ENCODE measurements at regions of chr4 and their contacts with region 1.

Region 1: GRCh38 chr4:15457406-15458201 is 12.1 kb upstream of the CC2D2A start:
- DNase-seq: no peak
- H3K4me3 ChIP-seq: no peak overlapping the region
- H3K27ac ChIP-seq: no peak overlapping the region
- H3K4me1 ChIP-seq: no peaks in the 10 kb centered on the region
- H3K27me3 ChIP-seq: no peaks in the 10 kb centered on the region
- CTCF ChIP-seq: peak in 2 of 3 experiments; percentile 34 to 54; a peak in 2 of 4 replicates
- EP300 ChIP-seq: no peak
- POLR2A ChIP-seq: no peak
- RAD21 ChIP-seq: peak; percentile 77

Region 2: DNA sequence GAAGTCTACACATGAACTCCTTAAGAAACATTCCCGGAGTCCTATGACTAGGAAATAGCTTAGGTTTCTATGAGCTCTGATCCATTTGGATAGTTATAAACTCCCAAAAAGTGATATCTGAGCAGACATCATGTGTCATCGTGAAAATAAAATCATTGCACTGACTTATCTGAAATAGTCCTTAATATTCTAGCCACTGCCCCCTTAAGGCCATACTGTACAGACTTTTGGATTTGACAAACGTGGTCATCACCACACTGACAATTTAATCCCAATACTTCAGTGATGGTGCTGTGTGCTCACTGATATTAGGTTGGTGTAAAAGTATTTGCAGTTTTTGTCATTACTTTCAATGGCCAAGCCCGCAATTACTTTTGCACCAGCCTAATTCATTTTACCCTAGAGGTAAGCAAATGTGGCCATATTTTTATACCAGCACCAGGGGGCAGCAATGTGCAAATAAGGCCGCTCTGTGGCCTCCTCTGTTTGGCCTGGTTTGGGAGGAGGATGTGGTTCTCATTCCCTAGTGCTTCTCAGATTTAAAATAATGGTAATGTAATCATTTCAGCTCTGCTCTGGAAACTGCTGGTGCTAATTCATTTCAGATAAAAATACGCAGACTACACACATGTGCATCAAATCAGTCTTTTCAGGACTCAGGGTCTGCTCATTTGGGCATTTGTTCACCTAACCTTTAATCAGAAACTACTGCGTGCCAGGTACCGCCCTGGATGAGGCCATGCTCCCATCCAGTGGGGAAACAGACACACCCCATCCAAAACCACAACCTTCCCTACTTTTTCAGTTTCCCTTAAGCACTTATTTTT is 226.1 kb before region 1 on chr4:
- CTCF ChIA-PET with region 1: interaction called, 72 read pairs
- POLR2A ChIA-PET with region 1: no interaction called
- DNase-seq: peak in 1 of 2 experiments; percentile 83
- H3K4me3 ChIP-seq: no peak overlapping the region
- H3K27ac ChIP-seq: no peak overlapping the region
- H3K4me1 ChIP-seq: no peaks in the 10 kb centered on the region
- H3K27me3 ChIP-seq: no peaks in the 10 kb centered on the region
- CTCF ChIP-seq: peak; percentile 46 to 75 (median 74)
- EP300 ChIP-seq: no peak
- POLR2A ChIP-seq: no peak
- RAD21 ChIP-seq: peak; percentile 73 to 82

Region 3: DNA sequence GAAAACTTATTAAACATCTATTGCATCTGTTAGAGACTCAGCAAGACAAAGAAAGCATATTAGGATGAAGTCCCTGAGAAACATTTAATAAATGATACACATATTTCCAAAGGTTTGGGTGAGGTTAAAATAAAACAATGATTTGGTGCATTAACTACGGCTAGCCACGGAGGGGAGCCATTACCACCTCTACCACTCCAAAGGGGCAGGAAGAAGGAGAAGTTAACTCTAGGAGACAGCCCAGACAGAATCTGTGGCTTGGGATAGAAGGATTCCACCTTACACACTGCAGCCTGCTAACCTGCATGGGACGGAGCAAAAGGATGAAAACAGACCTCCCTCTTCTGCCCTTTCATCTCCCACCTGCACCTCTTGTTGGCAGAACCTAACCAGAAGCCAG is 218.9 kb before region 1 on chr4:
- CTCF ChIA-PET with region 1: interaction called, 72 read pairs
- POLR2A ChIA-PET with region 1: no interaction called
- DNase-seq: peak in 1 of 2 experiments; percentile 65
- H3K4me3 ChIP-seq: no peak overlapping the region
- H3K27ac ChIP-seq: no peak overlapping the region
- H3K4me1 ChIP-seq: no peaks in the 10 kb centered on the region
- H3K27me3 ChIP-seq: no peaks in the 10 kb centered on the region
- CTCF ChIP-seq: peak; percentile 35 to 83 (median 72)
- EP300 ChIP-seq: no peak
- POLR2A ChIP-seq: no peak
- RAD21 ChIP-seq: peak; percentile 96 to 97

Region 4: DNA sequence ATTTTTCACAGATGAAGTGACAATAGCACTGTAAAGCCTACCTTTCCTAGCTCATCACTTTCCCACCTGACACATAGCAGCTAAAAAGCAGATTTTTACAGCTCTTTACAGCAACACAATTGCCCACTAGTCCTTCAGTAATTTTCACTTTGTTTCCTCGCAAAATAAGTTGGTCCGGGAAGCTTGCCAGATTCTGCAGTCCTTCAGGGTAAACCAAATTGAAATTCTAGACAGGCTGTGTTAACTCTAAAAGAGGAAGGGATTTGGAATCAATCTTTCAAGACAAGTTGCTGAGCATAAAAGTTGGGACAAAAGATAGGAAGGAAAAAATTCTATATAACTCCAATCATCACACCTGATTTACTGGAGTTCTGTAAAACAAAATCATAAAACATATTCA is 21.1 kb before region 1 on chr4:
- CTCF ChIA-PET with region 1: interaction called, 10 read pairs
- POLR2A ChIA-PET with region 1: no interaction called
- DNase-seq: no peak
- H3K4me3 ChIP-seq: no peak overlapping the region
- H3K27ac ChIP-seq: no peak overlapping the region
- H3K4me1 ChIP-seq: no peaks in the 10 kb centered on the region
- H3K27me3 ChIP-seq: no peaks in the 10 kb centered on the region
- CTCF ChIP-seq: no peak
- EP300 ChIP-seq: no peak
- POLR2A ChIP-seq: no peak
- RAD21 ChIP-seq: no peak

Region 5: DNA sequence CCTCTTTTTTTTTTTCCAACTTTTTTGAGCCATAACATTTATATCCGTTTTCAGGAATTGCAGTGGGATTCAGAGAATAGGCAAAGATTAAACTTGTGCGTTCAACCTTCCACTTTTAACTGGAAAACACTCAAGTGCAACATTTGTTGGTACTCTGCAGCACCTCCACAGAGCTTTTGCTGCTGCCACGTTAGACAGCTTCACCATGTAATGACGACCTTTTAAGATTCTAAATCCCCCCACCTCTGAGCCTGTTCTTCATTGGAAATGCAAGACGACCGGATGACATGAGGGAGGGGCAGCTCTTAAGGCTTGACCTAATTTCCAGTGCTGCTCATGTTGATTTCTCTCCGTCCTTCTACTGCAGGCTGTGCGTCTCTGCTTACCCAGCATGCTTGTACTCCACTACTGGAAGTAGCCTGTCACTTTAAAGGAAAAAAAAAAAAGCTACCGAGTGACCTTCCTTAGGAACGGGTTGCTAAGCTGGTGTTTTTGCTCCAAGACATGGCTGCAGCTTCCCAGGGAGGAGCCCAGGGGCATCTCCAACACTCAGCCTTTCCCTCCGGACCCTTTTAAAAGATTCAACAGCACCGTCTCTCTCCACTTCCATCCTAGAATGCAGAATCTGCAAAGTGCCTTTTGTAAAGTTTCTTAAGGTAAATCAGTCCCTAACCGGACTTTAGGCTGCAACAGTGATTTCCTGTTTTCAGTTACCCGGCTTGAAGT is 12.0 kb after region 1 on chr4 and contains the start of gene CC2D2A:
- CTCF ChIA-PET with region 1: interaction called, 44 read pairs
- POLR2A ChIA-PET with region 1: no interaction called
- DNase-seq: no peak
- H3K4me3 ChIP-seq: peak within 1 kb of the TSS; percentile 11 to 55 (median 14); a peak in 5 of 8 replicates
- H3K27ac ChIP-seq: no peak within 1 kb of the TSS
- H3K4me1 ChIP-seq: peaks cover 3 to 15% (median 5%) of the 10 kb centered on the region in 4 experiments; a peak in 4 of 7 replicates
- H3K27me3 ChIP-seq: no peaks in the 10 kb centered on the region
- CTCF ChIP-seq: no peak
- EP300 ChIP-seq: no peak
- POLR2A ChIP-seq: no peak
- RAD21 ChIP-seq: no peak
- total RNA-seq, gene CC2D2A: 11.0 and 11.1 TPM in 2 replicates

Region 6: GRCh38 chr4:15513545-15513944 is 55.9 kb after region 1 on chr4:
- CTCF ChIA-PET with region 1: no interaction called
- POLR2A ChIA-PET with region 1: no interaction called
- DNase-seq: no peak
- H3K4me3 ChIP-seq: no peak overlapping the region
- H3K27ac ChIP-seq: no peak overlapping the region
- H3K4me1 ChIP-seq: no peaks in the 10 kb centered on the region
- H3K27me3 ChIP-seq: no peaks in the 10 kb centered on the region
- CTCF ChIP-seq: no peak
- EP300 ChIP-seq: no peak
- POLR2A ChIP-seq: no peak
- RAD21 ChIP-seq: 0 out of 4 replicates have a peak, but pooled peaks of 1 of the 2 experiments have one; percentile 4